ENCODE measurements at regions of chr13 and their contacts with region 1.

Region 1: GRCh38 chr13:91078093-91078679 is 269.3 kb upstream of the MIR17HG start:
- DNase-seq: peak; percentile 5
- H3K4me3 ChIP-seq: no peak overlapping the region
- H3K27ac ChIP-seq: no peak overlapping the region
- H3K4me1 ChIP-seq: no peaks in the 10 kb centered on the region
- H3K27me3 ChIP-seq: no peaks in the 10 kb centered on the region
- CTCF ChIP-seq: no peak
- POLR2A ChIP-seq: no peak

Region 2: GRCh38 chr13:90933097-90933826 is 144.9 kb before region 1 on chr13:
- CTCF ChIA-PET with region 1: no interaction called
- POLR2A ChIA-PET with region 1: no interaction called
- dilution Hi-C with region 1: no loop called
- intact Hi-C with region 1: no loop called
- DNase-seq: no peak
- H3K4me3 ChIP-seq: no peak overlapping the region
- H3K27ac ChIP-seq: no peak overlapping the region
- H3K4me1 ChIP-seq: no peaks in the 10 kb centered on the region
- H3K27me3 ChIP-seq: no peaks in the 10 kb centered on the region
- CTCF ChIP-seq: no peak
- POLR2A ChIP-seq: no peak

Region 3: GRCh38 chr13:91050970-91051369 is 27.2 kb before region 1 on chr13:
- CTCF ChIA-PET with region 1: no interaction called
- POLR2A ChIA-PET with region 1: no interaction called
- dilution Hi-C with region 1: no loop called
- intact Hi-C with region 1: no loop called
- DNase-seq: no peak
- H3K4me3 ChIP-seq: no peak overlapping the region
- H3K27ac ChIP-seq: no peak overlapping the region
- H3K4me1 ChIP-seq: no peaks in the 10 kb centered on the region
- H3K27me3 ChIP-seq: no peaks in the 10 kb centered on the region
- CTCF ChIP-seq: no peak
- POLR2A ChIP-seq: no peak

Region 4: DNA sequence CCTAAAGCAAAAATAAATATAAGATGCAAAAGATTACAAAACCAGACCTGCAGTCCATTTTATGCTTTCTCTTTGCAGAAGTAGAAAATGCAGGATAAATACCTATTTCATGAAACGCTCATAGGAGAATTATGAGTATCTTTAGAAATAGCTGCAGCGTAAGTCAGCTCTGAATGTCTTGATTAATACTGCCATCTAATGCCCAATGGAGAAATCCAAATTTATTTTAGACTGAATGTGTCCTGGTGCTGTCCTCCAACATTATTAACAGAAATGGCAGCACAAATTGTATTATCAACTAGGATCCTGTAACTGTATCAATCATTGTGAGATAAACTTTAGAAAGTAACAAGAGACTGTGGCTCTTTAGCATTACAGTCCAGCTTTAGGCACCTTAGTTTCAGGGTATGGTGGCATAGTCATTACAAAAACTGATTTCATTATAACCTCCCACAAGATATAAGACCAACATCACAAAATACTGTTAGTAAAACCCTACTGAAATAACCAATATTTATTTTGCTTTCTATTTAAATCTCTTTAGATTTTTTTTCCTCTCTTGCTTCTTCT is 107.2 kb after region 1 on chr13:
- CTCF ChIA-PET with region 1: interaction called, 10 read pairs
- POLR2A ChIA-PET with region 1: no interaction called
- dilution Hi-C with region 1: no loop called
- intact Hi-C with region 1: no loop called
- DNase-seq: peak; percentile 2
- H3K4me3 ChIP-seq: no peak overlapping the region
- H3K27ac ChIP-seq: no peak overlapping the region
- H3K4me1 ChIP-seq: no peaks in the 10 kb centered on the region
- H3K27me3 ChIP-seq: no peaks in the 10 kb centered on the region
- CTCF ChIP-seq: no peak
- POLR2A ChIP-seq: no peak

Region 5: DNA sequence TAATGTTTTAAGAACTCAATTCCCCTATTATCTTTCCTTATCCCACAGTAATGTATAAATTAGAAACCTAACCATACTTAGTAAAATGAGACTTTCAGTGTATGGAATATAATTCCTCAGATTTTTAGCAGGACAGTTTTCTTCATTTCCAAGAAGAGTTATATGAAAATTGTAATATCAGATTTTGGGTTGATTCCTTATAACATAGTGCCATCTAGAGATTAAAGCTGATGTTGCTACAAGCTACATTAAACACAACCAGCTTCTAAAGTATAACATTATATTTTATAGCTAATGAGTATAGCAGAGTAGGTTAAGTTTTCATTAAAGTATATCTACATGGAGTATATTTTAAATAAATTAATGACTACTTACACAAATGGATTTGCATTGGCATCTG is 169.6 kb after region 1 on chr13:
- CTCF ChIA-PET with region 1: interaction called, 46 read pairs
- POLR2A ChIA-PET with region 1: no interaction called
- dilution Hi-C with region 1: no loop called
- intact Hi-C with region 1: loop called (anchors 1 kb)
- DNase-seq: peak; percentile 33
- H3K4me3 ChIP-seq: no peak overlapping the region
- H3K27ac ChIP-seq: no peak overlapping the region
- H3K4me1 ChIP-seq: no peaks in the 10 kb centered on the region
- H3K27me3 ChIP-seq: peaks cover 0 to 4% of the 10 kb centered on the region in 2 experiments
- CTCF ChIP-seq: peak in 1 of 2 donors; percentile 4
- POLR2A ChIP-seq: no peak